OCI-LY7 (cell line): ENCODE measurements at regions of chr17 and their contacts with region 1.

Region 1: GRCh38 chr17:20073055-20073979 is 64.2 kb downstream of the SPECC1 start:
- DNase-seq: no peak
- H3K4me3 ChIP-seq: no peak overlapping the region
- H3K27ac ChIP-seq: no peak overlapping the region
- H3K4me1 ChIP-seq: no peaks in the 10 kb centered on the region
- CTCF ChIP-seq: no peak

Region 2: GRCh38 chr17:19928299-19928698 is 145.0 kb before region 1 on chr17:
- CTCF ChIA-PET with region 1: no interaction called
- POLR2A ChIA-PET with region 1: interaction called, 10 read pairs
- intact Hi-C with region 1: no loop called
- DNase-seq: no peak
- H3K4me3 ChIP-seq: no peak overlapping the region
- H3K27ac ChIP-seq: no peak overlapping the region
- H3K4me1 ChIP-seq: no peaks in the 10 kb centered on the region
- CTCF ChIP-seq: no peak

Region 3: GRCh38 chr17:20059728-20060188 is 13.6 kb before region 1 on chr17:
- CTCF ChIA-PET with region 1: no interaction called
- POLR2A ChIA-PET with region 1: no interaction called
- intact Hi-C with region 1: no loop called
- DNase-seq: no peak
- H3K4me3 ChIP-seq: no peak overlapping the region
- H3K27ac ChIP-seq: no peak overlapping the region
- H3K4me1 ChIP-seq: no peaks in the 10 kb centered on the region
- CTCF ChIP-seq: no peak

Region 4: GRCh38 chr17:20091174-20092029 is 18.1 kb after region 1 on chr17:
- CTCF ChIA-PET with region 1: no interaction called
- POLR2A ChIA-PET with region 1: no interaction called
- intact Hi-C with region 1: no loop called
- DNase-seq: no peak
- H3K4me3 ChIP-seq: no peak overlapping the region
- H3K27ac ChIP-seq: no peak overlapping the region
- H3K4me1 ChIP-seq: no peaks in the 10 kb centered on the region
- CTCF ChIP-seq: no peak